Left cardiac atrium (tissue), 4 donors: ENCODE measurements at regions of chr19 and their contacts with region 1.

Region 1: GRCh38 chr19:40341601-40342482 is 6.4 kb downstream of the C19orf47 start:
- DNase-seq: peak; percentile 73
- ATAC-seq: peak; percentile 96 to 98

Region 2: DNA sequence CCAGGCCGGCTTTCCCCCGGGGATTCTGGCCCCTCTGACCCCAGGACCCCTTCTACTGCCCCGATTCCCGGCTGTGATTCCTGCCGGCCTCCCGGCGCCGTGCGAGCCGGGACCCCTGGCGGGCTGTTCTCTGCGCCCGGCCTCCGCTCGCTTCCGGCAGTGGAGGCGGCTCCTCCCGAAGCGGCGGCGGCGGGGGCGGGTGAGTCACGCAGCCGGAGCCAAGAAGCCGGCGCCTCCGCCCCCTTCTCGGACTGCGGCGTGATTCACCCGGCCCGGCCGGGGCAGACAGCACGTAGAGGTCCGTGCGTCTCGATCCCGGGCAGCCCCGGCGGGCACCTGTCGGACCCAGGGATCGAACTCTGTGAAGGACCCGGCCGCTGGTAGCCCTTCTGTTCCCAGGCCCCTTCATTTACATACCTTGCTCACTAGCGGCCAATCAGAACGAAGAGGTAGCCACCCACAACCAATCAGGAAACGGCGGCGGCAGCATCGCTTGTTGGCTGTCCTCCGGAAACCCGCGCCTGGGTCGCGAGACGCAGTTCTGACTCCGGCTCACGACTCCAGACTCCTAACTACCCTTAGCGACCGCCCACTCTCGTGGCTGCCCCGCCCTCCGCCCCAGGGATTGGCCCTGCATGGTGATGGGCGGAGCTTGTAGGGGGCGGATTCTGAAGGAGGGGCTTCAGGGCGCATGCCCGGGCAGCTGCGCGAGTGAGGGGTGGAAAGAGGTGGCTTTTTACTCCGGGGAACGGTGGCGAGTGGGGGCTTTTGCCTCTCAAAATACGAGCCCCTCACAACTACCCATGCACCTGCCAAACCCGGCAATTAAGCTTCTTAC is 83.8 kb after region 1 on chr19 and contains the start of gene SERTAD1:
- intact Hi-C with region 1: loop called in 1 of 2 experiments (anchors 5 kb)
- DNase-seq: peak; percentile 100
- ATAC-seq: peak; percentile 93 to 95
- total RNA-seq, gene SERTAD1: 9.4 to 17.0 TPM